Activated T-helper 1 cell treated with anti-CD3 and anti-CD28 coated beads, Interleukin-12 subunit alpha, Interleukin-12 subunit beta, Interleukin-2, Interleukin-4 antibody, amounts not matched to agents 30 ng/mL and 10 ng/mL and 1 ng/mL, durations not matched to agents 14 hours and 24 hours and 36 hours (primary cell): ENCODE measurements at regions of chr14 and their contacts with region 1.

Region 1: DNA sequence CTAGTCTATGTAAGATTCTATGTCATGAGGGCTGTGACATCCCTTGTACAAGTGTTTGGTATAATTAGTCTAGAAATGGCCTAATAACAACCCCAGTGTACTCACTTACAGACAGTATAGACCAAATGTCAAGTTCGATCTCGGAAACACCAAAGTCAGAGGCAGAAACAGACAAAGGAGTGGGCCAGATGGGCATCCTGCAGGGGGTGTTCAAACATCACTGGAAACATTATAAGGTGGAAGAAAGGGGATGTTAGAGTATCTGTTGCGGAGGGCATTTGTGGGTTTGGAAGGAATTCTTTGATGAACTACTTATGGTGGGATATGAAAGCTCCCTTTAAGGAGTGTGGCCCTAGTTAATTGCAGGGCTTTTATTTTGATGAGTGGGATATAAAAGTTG is 134.6 kb downstream of the ESR2 start:
- DNase-seq: no peak
- H3K4me3 Mint-ChIP-seq: no peak overlapping the region
- H3K27ac Mint-ChIP-seq: no peak overlapping the region
- H3K4me1 Mint-ChIP-seq: no peaks in the 10 kb centered on the region
- H3K27me3 Mint-ChIP-seq: no peaks in the 10 kb centered on the region

Region 2: GRCh38 chr14:64026600-64026999 is 133.0 kb before region 1 on chr14:
- intact Hi-C with region 1: loop called (anchors 10 kb)
- DNase-seq: no peak
- H3K4me3 Mint-ChIP-seq: no peak overlapping the region
- H3K27ac Mint-ChIP-seq: no peak overlapping the region
- H3K4me1 Mint-ChIP-seq: no peaks in the 10 kb centered on the region
- H3K27me3 Mint-ChIP-seq: no peaks in the 10 kb centered on the region

Region 3: GRCh38 chr14:64178814-64179213 is 19.2 kb after region 1 on chr14:
- intact Hi-C with region 1: no loop called
- DNase-seq: no peak
- H3K4me3 Mint-ChIP-seq: no peak overlapping the region
- H3K27ac Mint-ChIP-seq: no peak overlapping the region
- H3K4me1 Mint-ChIP-seq: peaks cover 11% of the 10 kb centered on the region
- H3K27me3 Mint-ChIP-seq: no peaks in the 10 kb centered on the region

Region 4: GRCh38 chr14:64196814-64197411 is 37.3 kb after region 1 on chr14:
- intact Hi-C with region 1: loop called (anchors 1 kb)
- DNase-seq: no peak
- H3K4me3 Mint-ChIP-seq: peak overlapping the region; percentile 66
- H3K27ac Mint-ChIP-seq: no peak overlapping the region
- H3K4me1 Mint-ChIP-seq: peaks cover 44% of the 10 kb centered on the region
- H3K27me3 Mint-ChIP-seq: no peaks in the 10 kb centered on the region